Endothelial cell of umbilical vein (primary cell): ENCODE measurements at regions of chr7 and their contacts with region 1.

Region 1: GRCh38 chr7:3559278-3559677 is 258.2 kb downstream of the SDK1 start:
- DNase-seq: peak; percentile 88
- H3K4me3 ChIP-seq: peak overlapping the region in 2 of 3 experiments; percentile 7 to 47
- H3K27ac ChIP-seq: peak overlapping the region; percentile 62
- H3K4me1 ChIP-seq: peaks cover 20% of the 10 kb centered on the region
- H3K27me3 ChIP-seq: no peaks in the 10 kb centered on the region
- CTCF ChIP-seq: no peak
- POLR2A ChIP-seq: no peak

Region 2: GRCh38 chr7:3493499-3493898 is 65.8 kb before region 1 on chr7:
- CTCF ChIA-PET with region 1: no interaction called
- POLR2A ChIA-PET with region 1: no interaction called
- dilution Hi-C with region 1: no loop called
- intact Hi-C with region 1: loop called (anchors 2 kb)
- DNase-seq: peak; percentile 64
- H3K4me3 ChIP-seq: peak overlapping the region in 1 of 3 experiments; percentile 15
- H3K27ac ChIP-seq: peak overlapping the region; percentile 46
- H3K4me1 ChIP-seq: peaks cover 13% of the 10 kb centered on the region
- H3K27me3 ChIP-seq: no peaks in the 10 kb centered on the region
- CTCF ChIP-seq: no peak
- POLR2A ChIP-seq: no peak

Region 3: GRCh38 chr7:3579638-3580219 is 20.5 kb after region 1 on chr7:
- CTCF ChIA-PET with region 1: no interaction called
- POLR2A ChIA-PET with region 1: no interaction called
- dilution Hi-C with region 1: no loop called
- intact Hi-C with region 1: no loop called
- DNase-seq: no peak
- H3K4me3 ChIP-seq: no peak overlapping the region
- H3K27ac ChIP-seq: no peak overlapping the region
- H3K4me1 ChIP-seq: no peaks in the 10 kb centered on the region
- H3K27me3 ChIP-seq: no peaks in the 10 kb centered on the region
- CTCF ChIP-seq: no peak
- POLR2A ChIP-seq: no peak

Region 4: GRCh38 chr7:3589752-3590151 is 30.5 kb after region 1 on chr7:
- CTCF ChIA-PET with region 1: no interaction called
- POLR2A ChIA-PET with region 1: no interaction called
- dilution Hi-C with region 1: no loop called
- intact Hi-C with region 1: no loop called
- DNase-seq: no peak
- H3K4me3 ChIP-seq: no peak overlapping the region
- H3K27ac ChIP-seq: no peak overlapping the region
- H3K4me1 ChIP-seq: no peaks in the 10 kb centered on the region
- H3K27me3 ChIP-seq: no peaks in the 10 kb centered on the region
- CTCF ChIP-seq: no peak
- POLR2A ChIP-seq: no peak

Region 5: GRCh38 chr7:3722396-3722922 is 163.2 kb after region 1 on chr7:
- CTCF ChIA-PET with region 1: no interaction called
- POLR2A ChIA-PET with region 1: no interaction called
- dilution Hi-C with region 1: no loop called
- intact Hi-C with region 1: no loop called
- DNase-seq: no peak
- H3K4me3 ChIP-seq: no peak overlapping the region
- H3K27ac ChIP-seq: no peak overlapping the region
- H3K4me1 ChIP-seq: no peaks in the 10 kb centered on the region
- H3K27me3 ChIP-seq: no peaks in the 10 kb centered on the region
- CTCF ChIP-seq: no peak
- POLR2A ChIP-seq: no peak